CD8-positive, alpha-beta memory T cell (primary cell): ENCODE measurements at regions of chr12 and their contacts with region 1.

Region 1: GRCh38 chr12:57782608-57783465 is at the start of gene TSFM:
- DNase-seq: peak; percentile 91 to 98 (median 94)
- H3K4me3 ChIP-seq: peak within 1 kb of the TSS; percentile 99
- H3K4me3 Mint-ChIP-seq: peak within 1 kb of the TSS; percentile 99 to 100 (median 100)
- H3K27ac ChIP-seq: peak within 1 kb of the TSS; percentile 95
- H3K27ac Mint-ChIP-seq: peak within 1 kb of the TSS; percentile 98 to 100 (median 99)
- H3K4me1 ChIP-seq: peaks cover 40% of the 10 kb centered on the region
- H3K4me1 Mint-ChIP-seq: peaks cover 45 to 55% (median 51%) of the 10 kb centered on the region in 3 donors
- H3K27me3 ChIP-seq: no peaks in the 10 kb centered on the region
- H3K27me3 Mint-ChIP-seq: peaks cover 0 to 3% of the 10 kb centered on the region in 2 donors
- total RNA-seq, gene TSFM: 64.0 to 69.0 TPM

Region 2: DNA sequence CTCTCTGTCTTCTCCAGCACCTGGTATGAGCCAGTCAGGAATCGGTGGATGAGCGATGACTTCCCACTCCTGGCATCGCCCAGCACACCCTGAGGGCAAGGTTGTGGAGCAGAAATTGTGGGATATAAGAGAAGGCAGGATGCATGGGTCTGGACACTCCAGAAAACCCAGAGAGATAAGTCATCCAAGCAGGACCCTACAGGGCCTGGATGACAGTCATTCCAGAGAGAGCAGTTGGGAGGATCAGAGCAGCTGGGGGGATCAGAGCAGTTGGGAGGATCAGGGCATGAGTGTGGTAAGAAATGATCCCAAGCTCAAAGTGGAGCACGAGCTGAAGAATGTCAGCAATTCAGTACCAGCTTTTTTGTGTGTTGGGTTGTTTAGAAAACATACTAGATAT is 48.2 kb before region 1 on chr12:
- CTCF ChIA-PET with region 1: no interaction called
- POLR2A ChIA-PET with region 1: no interaction called
- DNase-seq: no peak
- H3K4me3 ChIP-seq: no peak overlapping the region
- H3K4me3 Mint-ChIP-seq: peak overlapping the region in 1 of 7 donors; percentile 80
- H3K27ac ChIP-seq: no peak overlapping the region
- H3K27ac Mint-ChIP-seq: peak overlapping the region in 7 of 8 donors; percentile 37 to 93 (median 84)
- H3K4me1 ChIP-seq: peaks cover 10% of the 10 kb centered on the region
- H3K4me1 Mint-ChIP-seq: peaks cover 23 to 31% (median 24%) of the 10 kb centered on the region in 3 donors
- H3K27me3 ChIP-seq: no peaks in the 10 kb centered on the region
- H3K27me3 Mint-ChIP-seq: peaks cover 0 to 2% of the 10 kb centered on the region in 2 donors

Region 3: GRCh38 chr12:57754411-57755193 is 28.2 kb before region 1 on chr12 and contains the start of gene MARCHF9:
- CTCF ChIA-PET with region 1: interaction called, 24 read pairs
- POLR2A ChIA-PET with region 1: interaction called, 5 read pairs
- DNase-seq: peak; percentile 76 to 92 (median 81)
- H3K4me3 ChIP-seq: peak within 1 kb of the TSS; percentile 65
- H3K4me3 Mint-ChIP-seq: peak within 1 kb of the TSS; percentile 88 to 97 (median 94)
- H3K27ac ChIP-seq: peak within 1 kb of the TSS; percentile 69
- H3K27ac Mint-ChIP-seq: peak within 1 kb of the TSS; percentile 93 to 100 (median 97)
- H3K4me1 ChIP-seq: peaks cover 50% of the 10 kb centered on the region
- H3K4me1 Mint-ChIP-seq: peaks cover 55 to 71% (median 65%) of the 10 kb centered on the region in 3 donors
- H3K27me3 ChIP-seq: no peaks in the 10 kb centered on the region
- H3K27me3 Mint-ChIP-seq: peaks cover 0 to 2% of the 10 kb centered on the region in 2 donors
- total RNA-seq, gene MARCHF9: 26.3 to 27.2 TPM

Region 4: GRCh38 chr12:57765042-57765697 is 17.7 kb before region 1 on chr12:
- CTCF ChIA-PET with region 1: interaction called, 24 read pairs
- POLR2A ChIA-PET with region 1: no interaction called
- DNase-seq: peak in 4 of 5 donors; percentile 32 to 67 (median 41)
- H3K4me3 ChIP-seq: peak overlapping the region; percentile 70
- H3K4me3 Mint-ChIP-seq: peak overlapping the region; percentile 83 to 90 (median 85)
- H3K27ac ChIP-seq: no peak overlapping the region
- H3K27ac Mint-ChIP-seq: peak overlapping the region in 4 of 8 donors; percentile 29 to 95 (median 82)
- H3K4me1 ChIP-seq: peaks cover 24% of the 10 kb centered on the region
- H3K4me1 Mint-ChIP-seq: peaks cover 19 to 30% (median 21%) of the 10 kb centered on the region in 3 donors
- H3K27me3 ChIP-seq: peaks cover 18% of the 10 kb centered on the region
- H3K27me3 Mint-ChIP-seq: peaks cover 30 to 33% of the 10 kb centered on the region in 2 donors

Region 5: DNA sequence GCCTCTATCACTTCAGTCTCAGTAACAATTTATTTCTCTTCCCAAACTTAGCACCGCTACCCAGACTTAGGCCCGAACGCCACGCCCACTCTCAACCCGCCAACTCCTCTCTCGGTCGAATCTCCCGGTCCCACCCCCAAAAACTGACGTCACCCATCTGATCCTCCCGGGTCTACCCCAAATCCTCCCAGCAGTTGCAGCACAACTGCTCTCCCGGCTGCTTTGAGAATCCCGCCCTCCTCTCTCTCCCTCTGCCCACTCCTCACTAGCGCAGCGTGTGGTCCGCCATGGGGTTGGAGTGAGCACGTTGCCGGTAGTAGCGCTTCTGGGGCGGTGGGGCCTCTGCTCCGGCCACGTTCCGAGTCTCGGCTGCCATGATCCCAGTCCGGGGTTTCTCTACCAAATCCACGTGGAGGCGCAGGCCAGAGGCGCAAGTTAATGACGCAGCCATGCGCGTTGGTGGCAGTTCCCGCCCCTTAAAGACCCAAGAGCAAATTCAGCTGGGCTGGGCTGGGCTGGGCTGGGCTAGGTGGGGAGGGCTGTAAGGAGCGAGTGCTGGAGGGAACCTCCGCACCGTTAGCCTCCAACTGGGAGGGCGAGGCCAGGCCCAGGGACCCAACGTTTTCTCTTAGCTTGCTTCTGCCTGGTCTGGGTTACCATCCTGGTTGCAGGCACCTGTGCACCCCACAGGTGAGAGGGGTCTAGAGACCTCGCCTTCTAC is 11.0 kb before region 1 on chr12 and contains the start of gene METTL1:
- CTCF ChIA-PET with region 1: interaction called, 14 read pairs
- POLR2A ChIA-PET with region 1: interaction called, 6 read pairs
- DNase-seq: peak; percentile 82 to 92 (median 86)
- H3K4me3 ChIP-seq: peak within 1 kb of the TSS; percentile 93
- H3K4me3 Mint-ChIP-seq: peak within 1 kb of the TSS; percentile 93 to 99 (median 96)
- H3K27ac ChIP-seq: peak within 1 kb of the TSS; percentile 89
- H3K27ac Mint-ChIP-seq: peak within 1 kb of the TSS; percentile 92 to 99 (median 98)
- H3K4me1 ChIP-seq: peaks cover 12% of the 10 kb centered on the region
- H3K4me1 Mint-ChIP-seq: peaks cover 19 to 24% (median 21%) of the 10 kb centered on the region in 3 donors
- H3K27me3 ChIP-seq: peaks cover 2% of the 10 kb centered on the region
- H3K27me3 Mint-ChIP-seq: peaks cover 0 to 5% of the 10 kb centered on the region in 2 donors
- total RNA-seq, gene METTL1: 69.8 to 74.2 TPM